ENCODE measurements at regions of chr10 and their contacts with region 1.

Region 1: DNA sequence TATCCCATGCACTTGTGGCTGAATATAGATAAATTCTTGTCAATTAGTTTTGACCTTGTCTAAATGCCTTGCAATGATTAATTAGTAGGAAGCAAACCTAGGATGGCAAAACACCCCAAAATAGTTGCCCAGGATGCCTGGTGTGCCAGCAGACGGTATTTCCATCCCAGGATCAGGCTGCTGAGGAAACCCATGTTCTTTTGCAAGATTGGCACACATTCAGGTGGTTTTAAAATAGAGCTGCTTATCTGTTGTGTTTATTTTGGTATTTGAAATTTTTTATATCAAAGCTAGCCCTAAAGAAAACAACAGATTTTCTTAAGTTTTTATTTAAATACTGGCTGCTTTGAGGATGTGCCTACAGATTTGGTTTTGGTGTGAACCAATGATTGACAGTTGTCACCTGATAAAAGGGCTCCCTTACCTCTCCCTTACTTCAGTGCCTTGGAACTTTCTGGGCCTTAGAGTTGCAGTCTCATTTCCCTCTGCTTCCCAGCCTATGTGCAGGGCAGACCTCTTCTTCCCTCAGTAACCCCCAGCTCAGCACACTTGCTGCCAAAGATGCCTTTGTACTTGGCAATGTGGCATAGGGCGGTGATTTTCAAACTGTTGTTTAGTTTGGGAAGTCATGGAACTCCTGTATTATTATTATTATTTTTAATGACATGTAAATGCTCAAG is 54.0 kb downstream of the CCNY start:
- DNase-seq: no peak
- ATAC-seq: peak; percentile 67
- H3K4me3 ChIP-seq: no peak overlapping the region
- H3K27ac ChIP-seq: peak overlapping the region in 1 of 2 donors; percentile 50
- H3K4me1 ChIP-seq: peaks cover 0 to 1% of the 10 kb centered on the region in 2 donors
- H3K27me3 ChIP-seq: no peaks in the 10 kb centered on the region

Region 2: GRCh38 chr10:35040760-35041501 is 349.4 kb before region 1 on chr10:
- intact Hi-C with region 1: no loop called
- DNase-seq: no peak
- ATAC-seq: no peak
- H3K4me3 ChIP-seq: no peak overlapping the region
- H3K27ac ChIP-seq: no peak overlapping the region
- H3K4me1 ChIP-seq: no peaks in the 10 kb centered on the region
- H3K27me3 ChIP-seq: no peaks in the 10 kb centered on the region

Region 3: GRCh38 chr10:35379226-35380137 is 10.8 kb before region 1 on chr10:
- intact Hi-C with region 1: loop called in 1 of 2 experiments (anchors 1 kb)
- DNase-seq: peak in 1 of 2 donors; percentile 68
- ATAC-seq: peak; percentile 89
- H3K4me3 ChIP-seq: no peak overlapping the region
- H3K27ac ChIP-seq: peak overlapping the region; percentile 15 to 55
- H3K4me1 ChIP-seq: peaks cover 0 to 7% of the 10 kb centered on the region in 2 donors
- H3K27me3 ChIP-seq: no peaks in the 10 kb centered on the region

Measured in aorta (tissue), 5 donors.